ENCODE measurements at regions of chr5 and their contacts with region 1.

Region 1: GRCh38 chr5:54492178-54492577 is 25.4 kb upstream of the SNX18 start:
- DNase-seq: no peak
- H3K4me3 Mint-ChIP-seq: no peak overlapping the region
- H3K27ac Mint-ChIP-seq: no peak overlapping the region
- H3K4me1 Mint-ChIP-seq: no peaks in the 10 kb centered on the region
- H3K27me3 Mint-ChIP-seq: peaks cover 9% of the 10 kb centered on the region

Region 2: GRCh38 chr5:54243473-54244080 is 248.6 kb before region 1 on chr5:
- CTCF ChIA-PET with region 1: interaction called, 16 read pairs
- POLR2A ChIA-PET with region 1: no interaction called
- DNase-seq: peak; percentile 27
- H3K4me3 Mint-ChIP-seq: no peak overlapping the region
- H3K27ac Mint-ChIP-seq: no peak overlapping the region
- H3K4me1 Mint-ChIP-seq: no peaks in the 10 kb centered on the region
- H3K27me3 Mint-ChIP-seq: no peaks in the 10 kb centered on the region

Region 3: DNA sequence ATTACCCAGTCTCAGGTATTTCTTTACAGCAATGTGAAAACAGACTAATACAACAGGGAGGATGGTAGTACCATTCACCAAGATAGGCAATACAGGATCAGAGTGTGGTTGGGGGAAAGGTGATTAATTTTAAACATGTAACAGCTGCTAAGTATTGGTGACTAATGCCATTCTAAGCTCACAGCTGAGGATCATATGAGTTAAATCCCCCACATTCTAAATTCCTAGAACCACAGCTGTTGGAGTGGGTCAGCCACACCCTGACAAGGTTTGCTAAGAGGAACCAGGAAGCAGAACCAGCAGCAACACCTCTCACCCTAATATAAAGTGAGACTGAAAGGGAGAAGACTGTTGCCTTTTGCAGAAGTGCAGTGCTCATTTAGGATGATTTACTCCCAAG is 11.9 kb before region 1 on chr5:
- CTCF ChIA-PET with region 1: interaction called, 12 read pairs
- POLR2A ChIA-PET with region 1: no interaction called
- DNase-seq: no peak
- H3K4me3 Mint-ChIP-seq: no peak overlapping the region
- H3K27ac Mint-ChIP-seq: no peak overlapping the region
- H3K4me1 Mint-ChIP-seq: no peaks in the 10 kb centered on the region
- H3K27me3 Mint-ChIP-seq: peaks cover 13% of the 10 kb centered on the region

Region 4: GRCh38 chr5:54867310-54867944 is 375.2 kb after region 1 on chr5:
- CTCF ChIA-PET with region 1: interaction called, 22 read pairs
- POLR2A ChIA-PET with region 1: no interaction called
- DNase-seq: no peak
- H3K4me3 Mint-ChIP-seq: no peak overlapping the region
- H3K27ac Mint-ChIP-seq: no peak overlapping the region
- H3K4me1 Mint-ChIP-seq: peaks cover 20% of the 10 kb centered on the region
- H3K27me3 Mint-ChIP-seq: peaks cover 61% of the 10 kb centered on the region